Colonic mucosa (tissue), 4 donors: ENCODE measurements at regions of chr5 and their contacts with region 1.

Region 1: DNA sequence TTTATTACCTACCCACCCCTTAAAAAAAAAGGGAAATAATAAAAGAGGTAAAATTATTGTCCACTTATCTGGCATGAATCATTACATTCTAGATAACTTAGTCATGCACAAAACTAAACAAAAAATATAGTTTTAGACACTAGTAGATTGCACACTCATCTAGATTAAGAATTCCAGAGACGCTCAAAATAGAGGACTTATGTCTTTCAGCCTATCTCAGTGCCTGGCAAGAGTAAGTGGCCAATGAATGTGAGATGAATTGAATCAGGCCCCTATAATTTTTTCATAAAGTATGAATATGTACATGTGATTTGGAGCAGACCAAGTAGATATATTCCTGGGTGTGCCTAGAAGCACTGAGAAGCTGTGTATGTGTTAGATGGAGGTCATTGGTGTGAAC is 2.0 kb upstream of the RXFP3 start:
- DNase-seq: no peak
- H3K4me3 ChIP-seq: no peak overlapping the region
- H3K27ac ChIP-seq: no peak overlapping the region
- H3K4me1 ChIP-seq: no peaks in the 10 kb centered on the region
- H3K27me3 ChIP-seq: peaks cover 23% of the 10 kb centered on the region
- CTCF ChIP-seq: no peak

Region 2: DNA sequence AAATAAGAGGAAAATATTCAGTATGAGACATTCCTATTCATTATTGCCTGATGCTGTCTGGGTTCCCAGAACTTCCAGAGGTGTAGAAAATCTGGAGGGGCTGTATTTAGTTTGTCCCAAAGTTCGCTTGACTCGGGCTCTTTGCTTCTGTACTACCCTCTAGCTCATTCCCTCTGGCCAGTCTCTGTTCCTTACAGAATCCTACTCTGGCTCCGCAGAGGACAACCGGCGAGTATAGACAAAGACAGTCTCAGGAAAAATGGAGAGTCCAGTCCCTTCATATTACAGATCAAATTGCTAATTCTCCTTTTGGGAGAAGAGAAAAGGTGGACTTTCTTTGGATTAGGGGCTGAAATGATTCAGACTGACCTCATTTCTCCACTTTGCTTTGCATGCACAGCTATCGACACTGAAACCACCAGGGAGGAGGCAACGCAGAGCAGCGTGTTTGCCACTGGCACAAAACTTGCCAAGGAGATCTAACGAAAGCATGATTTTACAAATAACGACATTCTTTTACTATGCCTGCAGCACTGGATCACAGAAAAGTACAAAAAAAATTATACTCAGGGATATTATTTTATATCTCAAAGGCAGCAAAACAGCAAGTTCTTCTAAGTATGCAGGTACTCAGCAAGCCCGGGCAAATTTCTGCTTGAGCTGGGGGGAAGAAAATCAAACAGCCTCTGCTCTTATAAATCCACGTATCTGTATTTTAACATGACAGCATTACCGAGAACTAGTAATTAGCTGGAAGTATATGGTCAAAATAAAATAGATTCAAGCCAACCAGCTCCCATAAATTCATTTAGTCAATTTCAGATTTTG is 943.4 kb before region 1 on chr5:
- intact Hi-C with region 1: no loop called
- DNase-seq: no peak
- H3K4me3 ChIP-seq: no peak overlapping the region
- H3K27ac ChIP-seq: no peak overlapping the region
- H3K4me1 ChIP-seq: no peaks in the 10 kb centered on the region
- H3K27me3 ChIP-seq: no peaks in the 10 kb centered on the region
- CTCF ChIP-seq: no peak

Region 3: GRCh38 chr5:33439905-33440481 is 494.2 kb before region 1 on chr5:
- intact Hi-C with region 1: loop called (anchors 5 kb)
- DNase-seq: no peak
- H3K4me3 ChIP-seq: peak overlapping the region; percentile 70
- H3K27ac ChIP-seq: peak overlapping the region; percentile 92
- H3K4me1 ChIP-seq: peaks cover 5% of the 10 kb centered on the region
- H3K27me3 ChIP-seq: no peaks in the 10 kb centered on the region
- CTCF ChIP-seq: no peak